ENCODE measurements at regions of chr18 and their contacts with region 1.

Region 1: DNA sequence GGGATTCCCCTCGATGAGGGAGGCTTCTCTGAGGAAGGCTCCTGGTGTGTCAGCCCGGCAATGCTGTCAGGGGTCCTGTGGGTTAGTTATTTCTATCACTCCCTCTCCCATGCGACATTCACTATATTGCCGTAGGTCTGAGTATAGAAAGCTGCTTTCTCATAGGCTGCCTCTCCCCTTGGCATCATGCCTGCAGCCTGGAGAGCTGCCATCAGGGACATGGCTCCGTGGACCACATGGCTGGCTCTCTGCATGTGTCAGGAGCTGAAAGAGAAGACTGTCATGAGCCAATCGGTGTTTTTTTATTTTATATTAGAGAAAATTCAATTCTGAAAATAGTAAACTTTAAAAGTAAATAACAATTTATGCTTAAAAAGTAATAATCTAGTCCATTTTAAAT is 198.0 kb downstream of the CDH20 start:
- DNase-seq: no peak
- H3K4me3 ChIP-seq: no peak overlapping the region
- H3K27ac ChIP-seq: no peak overlapping the region
- H3K4me1 ChIP-seq: no peaks in the 10 kb centered on the region
- H3K27me3 ChIP-seq: no peaks in the 10 kb centered on the region
- CTCF ChIP-seq: no peak

Region 2: DNA sequence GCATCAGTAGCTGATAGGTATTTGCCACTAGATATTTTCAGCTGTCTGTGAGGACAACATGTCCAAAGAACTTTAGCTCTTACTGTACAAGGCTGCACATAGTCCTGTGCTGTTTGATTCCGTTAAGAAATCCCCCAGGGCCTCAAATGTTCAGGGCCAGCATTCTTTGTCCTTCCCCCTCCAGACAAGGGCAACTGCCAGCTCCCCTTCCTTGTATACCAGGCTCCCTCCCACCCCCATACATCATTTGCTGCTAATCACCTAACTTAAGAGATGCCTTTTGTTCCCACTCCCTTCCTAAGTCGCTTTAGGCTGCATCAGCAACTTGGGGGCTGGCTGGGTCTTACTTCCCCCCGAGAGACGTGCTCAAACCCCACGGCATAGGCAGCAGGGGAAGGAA is 59.2 kb before region 1 on chr18:
- intact Hi-C with region 1: loop called (anchors 10 kb)
- DNase-seq: no peak
- H3K4me3 ChIP-seq: no peak overlapping the region
- H3K27ac ChIP-seq: no peak overlapping the region
- H3K4me1 ChIP-seq: no peaks in the 10 kb centered on the region
- H3K27me3 ChIP-seq: no peaks in the 10 kb centered on the region
- CTCF ChIP-seq: no peak

Measured in tibial artery (tissue), 4 donors.